ENCODE measurements at regions of chr1 and their contacts with region 1.

Region 1: DNA sequence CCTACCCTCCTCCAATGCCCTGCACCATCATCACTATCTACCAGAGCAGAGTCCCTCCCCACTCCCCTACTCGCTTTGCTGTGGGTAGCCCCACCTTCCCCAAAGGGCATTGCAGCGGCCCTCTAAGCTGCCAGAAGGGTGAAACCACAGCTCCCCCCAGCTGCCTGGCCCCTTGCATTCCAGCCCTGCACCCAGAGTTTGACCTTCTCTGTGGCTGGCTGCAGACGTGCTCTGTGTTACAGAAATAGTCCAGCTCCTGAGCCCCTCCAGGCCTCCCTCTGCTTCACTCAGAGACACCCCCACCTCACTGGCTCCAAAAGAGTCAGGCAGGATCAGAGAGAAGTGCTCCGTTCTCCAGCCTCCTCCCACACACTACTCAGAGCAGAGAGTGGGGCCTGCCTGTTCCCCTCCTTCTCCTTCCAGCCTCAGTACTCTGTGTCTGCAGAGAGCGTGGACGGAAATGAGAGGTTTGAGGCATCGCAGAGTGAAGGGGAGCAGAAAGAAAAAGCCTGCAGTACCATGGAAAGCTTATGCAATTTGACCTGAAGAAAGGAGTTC is 63.2 kb downstream of the PLEKHA6 start:
- DNase-seq: peak; percentile 62
- H3K4me3 Mint-ChIP-seq: peak overlapping the region; percentile 40
- H3K27ac Mint-ChIP-seq: peak overlapping the region; percentile 62
- H3K4me1 Mint-ChIP-seq: peaks cover 67% of the 10 kb centered on the region
- H3K27me3 Mint-ChIP-seq: no peaks in the 10 kb centered on the region
- CTCF ChIP-seq: no peak

Region 2: GRCh38 chr1:204314171-204314895 is 17.8 kb after region 1 on chr1:
- CTCF ChIA-PET with region 1: interaction called, 28 read pairs
- POLR2A ChIA-PET with region 1: interaction called, 413 read pairs
- intact Hi-C with region 1: no loop called
- DNase-seq: peak; percentile 83
- H3K4me3 Mint-ChIP-seq: no peak overlapping the region
- H3K27ac Mint-ChIP-seq: peak overlapping the region; percentile 4
- H3K4me1 Mint-ChIP-seq: peaks cover 34% of the 10 kb centered on the region
- H3K27me3 Mint-ChIP-seq: no peaks in the 10 kb centered on the region
- CTCF ChIP-seq: no peak

Region 3: DNA sequence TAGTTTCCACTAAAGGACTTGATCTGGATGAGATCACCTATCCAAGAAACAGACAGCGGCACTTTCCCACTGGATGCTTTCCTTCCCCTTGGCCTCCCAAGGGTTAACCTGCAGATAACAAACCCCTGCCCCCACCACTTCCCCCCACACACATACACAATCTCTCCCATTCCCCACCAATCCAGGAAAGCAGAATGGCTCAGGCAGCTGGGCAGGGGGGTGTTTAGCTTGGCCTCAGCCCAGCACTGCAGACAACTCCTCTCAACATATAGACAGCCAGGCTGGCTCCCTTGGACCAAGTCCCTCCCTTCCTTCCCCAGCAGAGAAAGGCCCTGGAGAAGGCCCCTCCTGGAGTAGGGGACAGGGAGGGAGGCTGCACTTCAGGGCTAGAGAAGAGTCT is 38.6 kb after region 1 on chr1:
- CTCF ChIA-PET with region 1: interaction called, 3 read pairs
- POLR2A ChIA-PET with region 1: interaction called, 3 read pairs
- intact Hi-C with region 1: loop called (anchors 2 kb)
- DNase-seq: no peak
- H3K4me3 Mint-ChIP-seq: no peak overlapping the region
- H3K27ac Mint-ChIP-seq: no peak overlapping the region
- H3K4me1 Mint-ChIP-seq: no peaks in the 10 kb centered on the region
- H3K27me3 Mint-ChIP-seq: no peaks in the 10 kb centered on the region
- CTCF ChIP-seq: no peak